Stomach (tissue), 19 donors: ENCODE measurements at regions of chr16 and their contacts with region 1.

Region 1: GRCh38 chr16:16861546-16861945 is 482.6 kb downstream of the NPIPA7 start:
- DNase-seq: peak; percentile 45 to 80
- H3K4me3 ChIP-seq: no peak overlapping the region
- H3K27ac ChIP-seq: no peak overlapping the region
- H3K4me1 ChIP-seq: no peaks in the 10 kb centered on the region
- H3K27me3 ChIP-seq: peaks cover 0 to 33% (median 0%) of the 10 kb centered on the region in 3 donors
- CTCF ChIP-seq: peak in 5 of 7 experiments; percentile 6 to 72 (median 57)
- EP300 ChIP-seq: no peak
- POLR2A ChIP-seq: no peak

Region 2: GRCh38 chr16:16815641-16816040 is 45.9 kb before region 1 on chr16:
- intact Hi-C with region 1: no loop called
- DNase-seq: no peak
- H3K4me3 ChIP-seq: no peak overlapping the region
- H3K27ac ChIP-seq: no peak overlapping the region
- H3K4me1 ChIP-seq: no peaks in the 10 kb centered on the region
- H3K27me3 ChIP-seq: peaks cover 0 to 10% (median 0%) of the 10 kb centered on the region in 3 donors
- CTCF ChIP-seq: no peak
- EP300 ChIP-seq: no peak
- POLR2A ChIP-seq: no peak

Region 3: DNA sequence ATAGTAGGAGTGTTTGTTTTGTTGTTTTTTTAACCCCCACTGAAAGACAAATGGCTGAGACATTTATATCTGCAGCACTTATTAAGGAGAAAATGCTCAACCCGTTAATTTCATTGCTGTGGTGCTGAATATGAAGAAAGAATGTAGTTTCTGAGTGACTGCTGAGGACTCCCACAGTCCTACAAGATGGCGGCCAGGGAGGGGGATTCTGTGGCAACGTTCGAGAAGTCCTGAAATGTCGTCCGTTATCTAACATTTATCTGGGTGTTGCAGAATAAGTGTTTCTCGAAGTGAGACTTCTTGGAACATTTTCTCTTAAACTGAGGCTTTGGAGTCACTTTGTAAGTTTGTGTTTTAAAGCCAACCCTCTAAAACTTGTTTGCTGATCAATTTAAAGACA is 78.8 kb after region 1 on chr16:
- intact Hi-C with region 1: no loop called
- DNase-seq: no peak
- H3K4me3 ChIP-seq: no peak overlapping the region
- H3K27ac ChIP-seq: no peak overlapping the region
- H3K4me1 ChIP-seq: no peaks in the 10 kb centered on the region
- H3K27me3 ChIP-seq: peaks cover 0 to 21% (median 0%) of the 10 kb centered on the region in 3 donors
- CTCF ChIP-seq: no peak
- EP300 ChIP-seq: no peak
- POLR2A ChIP-seq: no peak

Region 4: DNA sequence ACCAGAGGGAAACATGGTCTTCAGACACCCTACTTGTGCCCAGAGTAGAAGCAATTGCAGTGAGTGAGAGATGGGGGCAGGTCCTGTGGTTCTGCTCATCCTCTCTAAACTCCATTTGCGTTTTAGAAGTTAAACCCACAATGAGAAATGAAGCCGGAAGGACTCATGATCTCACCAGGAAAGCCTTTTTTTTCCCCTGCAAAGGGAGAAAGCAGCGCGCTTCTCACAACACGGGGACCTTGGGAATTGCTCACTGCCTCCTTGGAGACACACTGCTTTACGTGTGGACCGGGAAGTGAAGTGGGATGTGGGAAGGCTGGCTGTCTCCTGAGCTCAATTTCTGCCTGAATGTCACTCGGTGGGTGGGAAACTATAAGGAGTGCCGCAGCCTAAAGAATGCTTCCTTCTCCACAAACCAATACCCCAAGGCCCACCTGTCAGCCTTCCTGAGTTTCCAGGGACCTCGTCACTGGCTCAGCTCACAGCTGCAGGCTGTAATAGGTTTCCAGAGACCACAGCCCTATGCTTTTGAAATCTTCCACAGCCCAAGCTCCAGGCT is 243.8 kb after region 1 on chr16:
- intact Hi-C with region 1: no loop called
- DNase-seq: peak in 1 of 2 donors; percentile 11
- H3K4me3 ChIP-seq: no peak overlapping the region
- H3K27ac ChIP-seq: no peak overlapping the region
- H3K4me1 ChIP-seq: no peaks in the 10 kb centered on the region
- H3K27me3 ChIP-seq: no peaks in the 10 kb centered on the region
- CTCF ChIP-seq: no peak
- EP300 ChIP-seq: no peak
- POLR2A ChIP-seq: no peak

Region 5: GRCh38 chr16:17578921-17579874 is 717.7 kb after region 1 on chr16:
- intact Hi-C with region 1: loop called (anchors 5 kb)
- DNase-seq: peak; percentile 57 to 88
- H3K4me3 ChIP-seq: no peak overlapping the region
- H3K27ac ChIP-seq: no peak overlapping the region
- H3K4me1 ChIP-seq: peaks cover 0 to 5% (median 0%) of the 10 kb centered on the region in 4 donors
- H3K27me3 ChIP-seq: peaks cover 0 to 2% (median 0%) of the 10 kb centered on the region in 3 donors
- CTCF ChIP-seq: peak in 5 of 7 experiments; percentile 67 to 91 (median 76)
- EP300 ChIP-seq: no peak
- POLR2A ChIP-seq: no peak